ENCODE measurements at regions of chr1 and their contacts with region 1.

Region 1: GRCh38 chr1:34113887-34114286 is 51.1 kb downstream of the CSMD2 start:
- DNase-seq: peak in 1 of 7 donors; percentile 4
- H3K4me3 ChIP-seq: no peak overlapping the region
- H3K27ac ChIP-seq: no peak overlapping the region
- H3K4me1 ChIP-seq: no peaks in the 10 kb centered on the region
- H3K27me3 ChIP-seq: no peaks in the 10 kb centered on the region
- CTCF ChIP-seq: peak; percentile 18 to 47 (median 37)
- POLR2A ChIP-seq: no peak

Region 2: GRCh38 chr1:33524586-33524985 is 589.3 kb before region 1 on chr1:
- intact Hi-C with region 1: no loop called
- DNase-seq: no peak
- H3K4me3 ChIP-seq: no peak overlapping the region
- H3K27ac ChIP-seq: no peak overlapping the region
- H3K4me1 ChIP-seq: no peaks in the 10 kb centered on the region
- H3K27me3 ChIP-seq: no peaks in the 10 kb centered on the region
- CTCF ChIP-seq: no peak
- POLR2A ChIP-seq: no peak

Region 3: GRCh38 chr1:34478515-34479077 is 364.7 kb after region 1 on chr1:
- intact Hi-C with region 1: no loop called
- DNase-seq: no peak
- H3K4me3 ChIP-seq: no peak overlapping the region
- H3K27ac ChIP-seq: no peak overlapping the region
- H3K4me1 ChIP-seq: no peaks in the 10 kb centered on the region
- H3K27me3 ChIP-seq: peaks cover 3% of the 10 kb centered on the region
- CTCF ChIP-seq: no peak
- POLR2A ChIP-seq: no peak

Region 4: GRCh38 chr1:34597877-34598514 is 484.1 kb after region 1 on chr1:
- intact Hi-C with region 1: loop called in 1 of 2 experiments (anchors 5 kb)
- DNase-seq: peak; percentile 73 to 87 (median 83)
- H3K4me3 ChIP-seq: no peak overlapping the region
- H3K27ac ChIP-seq: no peak overlapping the region
- H3K4me1 ChIP-seq: no peaks in the 10 kb centered on the region
- H3K27me3 ChIP-seq: no peaks in the 10 kb centered on the region
- CTCF ChIP-seq: peak; percentile 78 to 91 (median 84)
- POLR2A ChIP-seq: no peak

Measured in adrenal gland (tissue), 19 donors.